ENCODE measurements at regions of chr2 and their contacts with region 1.

Region 1: DNA sequence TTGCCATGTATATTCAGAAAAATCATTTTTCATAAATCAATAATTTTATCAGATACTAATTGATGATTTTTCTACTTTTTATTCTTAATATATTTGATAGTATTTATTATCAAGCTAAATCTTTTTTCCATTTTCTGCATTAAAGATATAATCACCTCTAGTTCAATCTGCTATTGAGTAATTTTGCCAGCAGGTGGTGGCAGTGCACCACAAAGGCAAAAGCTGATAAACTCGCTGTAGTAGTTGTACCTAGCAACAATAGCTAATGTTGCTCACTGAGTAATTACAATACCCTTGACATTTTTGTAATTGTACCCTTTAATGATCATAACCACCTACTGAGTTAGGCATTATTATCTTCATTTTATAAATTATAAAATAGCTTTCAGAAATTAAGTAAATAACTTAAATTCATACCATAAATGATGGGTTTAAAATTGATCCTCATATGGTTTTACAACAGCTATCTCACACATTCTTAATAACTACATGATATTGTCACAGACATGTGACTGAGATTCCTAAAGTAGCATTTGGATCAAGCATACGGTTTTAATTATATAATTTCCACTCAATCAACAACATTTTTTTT is 52.0 kb upstream of the CALCRL start:
- DNase-seq: peak; percentile 71
- H3K4me3 ChIP-seq: no peak overlapping the region
- H3K27ac ChIP-seq: no peak overlapping the region
- H3K4me1 ChIP-seq: no peaks in the 10 kb centered on the region
- H3K27me3 ChIP-seq: no peaks in the 10 kb centered on the region
- CTCF ChIP-seq: peak; percentile 42 to 71 (median 60)
- EP300 ChIP-seq: no peak
- POLR2A ChIP-seq: no peak

Region 2: GRCh38 chr2:187422282-187422681 is 77.8 kb before region 1 on chr2:
- intact Hi-C with region 1: no loop called
- DNase-seq: no peak
- H3K4me3 ChIP-seq: no peak overlapping the region
- H3K27ac ChIP-seq: no peak overlapping the region
- H3K4me1 ChIP-seq: no peaks in the 10 kb centered on the region
- H3K27me3 ChIP-seq: no peaks in the 10 kb centered on the region
- CTCF ChIP-seq: no peak
- EP300 ChIP-seq: no peak
- POLR2A ChIP-seq: no peak

Region 3: DNA sequence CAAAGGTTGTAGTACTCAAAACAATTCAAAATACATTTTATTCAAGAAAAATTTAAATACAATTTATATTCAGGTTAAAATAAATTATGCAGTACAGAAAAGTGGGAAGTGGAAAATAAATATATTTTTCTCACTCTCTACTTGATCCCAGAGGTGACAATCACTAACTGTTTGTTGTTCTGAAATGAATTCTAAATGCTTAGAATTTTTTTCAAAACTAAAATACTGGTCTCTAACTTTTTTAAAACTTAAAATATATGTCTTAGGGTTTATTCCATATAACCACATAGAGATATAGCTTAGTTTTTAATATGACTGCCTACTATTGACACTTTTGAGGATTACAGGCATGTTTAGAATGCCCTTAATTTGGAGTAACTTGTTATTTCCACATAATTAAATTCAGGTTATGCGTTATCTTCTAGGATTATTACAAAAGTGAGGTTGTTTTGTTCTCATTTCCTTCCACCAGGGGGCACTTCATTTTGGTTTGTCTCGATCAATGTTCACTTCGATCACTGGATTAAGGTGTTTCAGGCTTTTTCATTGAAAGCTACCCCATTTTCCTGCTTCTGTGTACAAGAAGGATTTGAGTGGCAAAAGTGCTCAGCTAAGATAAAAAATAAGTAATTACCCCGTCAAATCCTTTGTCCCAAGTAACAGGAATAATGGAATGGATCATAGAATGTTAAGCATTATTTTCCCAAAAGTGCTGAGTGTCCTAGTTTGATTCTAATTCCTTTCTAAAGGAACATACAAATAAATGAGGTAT is 81.3 kb after region 1 on chr2:
- intact Hi-C with region 1: loop called (anchors 2 kb)
- DNase-seq: no peak
- H3K4me3 ChIP-seq: peak overlapping the region in 3 of 4 donors; percentile 11 to 30 (median 20)
- H3K27ac ChIP-seq: no peak overlapping the region
- H3K4me1 ChIP-seq: peaks cover 0 to 10% (median 2%) of the 10 kb centered on the region in 4 donors
- H3K27me3 ChIP-seq: no peaks in the 10 kb centered on the region
- CTCF ChIP-seq: peak; percentile 38 to 76 (median 61)
- EP300 ChIP-seq: no peak
- POLR2A ChIP-seq: no peak

Measured in sigmoid colon (tissue), 7 donors.